WTC11 (cell line): ENCODE measurements at regions of chr12 and their contacts with region 1.

Region 1: GRCh38 chr12:53344824-53345485 is 8.8 kb upstream of the SP7 start:
- DNase-seq: peak; percentile 72
- ATAC-seq: peak; percentile 65
- H3K4me3 Mint-ChIP-seq: peak overlapping the region; percentile 96
- H3K27ac Mint-ChIP-seq: peak overlapping the region; percentile 79
- H3K4me1 Mint-ChIP-seq: peaks cover 13% of the 10 kb centered on the region
- H3K27me3 Mint-ChIP-seq: peaks cover 48% of the 10 kb centered on the region
- CTCF ChIP-seq: no peak

Region 2: DNA sequence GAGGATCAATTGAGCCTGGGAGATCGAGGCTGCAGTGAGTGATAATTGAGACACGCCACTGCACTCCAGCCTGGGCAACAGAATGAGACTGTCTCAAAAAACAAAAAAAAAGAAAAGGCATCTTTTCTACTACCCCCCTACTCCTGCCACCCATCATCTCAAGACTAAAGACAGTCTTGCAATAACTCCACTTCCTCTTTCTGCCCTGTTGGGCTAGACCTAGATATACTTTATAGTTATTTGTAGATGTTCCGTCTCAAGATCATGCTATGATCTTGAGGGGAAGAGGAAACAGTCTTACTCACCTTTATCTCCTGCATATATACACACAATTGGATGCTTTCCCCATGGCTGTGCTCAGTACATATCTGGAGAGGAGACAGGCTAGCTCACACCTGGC is 89.0 kb before region 1 on chr12:
- CTCF ChIA-PET with region 1: no interaction called
- POLR2A ChIA-PET with region 1: no interaction called
- DNase-seq: no peak
- ATAC-seq: no peak
- H3K4me3 Mint-ChIP-seq: no peak overlapping the region
- H3K27ac Mint-ChIP-seq: no peak overlapping the region
- H3K4me1 Mint-ChIP-seq: peaks cover 16% of the 10 kb centered on the region
- H3K27me3 Mint-ChIP-seq: no peaks in the 10 kb centered on the region
- CTCF ChIP-seq: no peak

Region 3: GRCh38 chr12:53379389-53380103 is 34.6 kb after region 1 on chr12:
- CTCF ChIA-PET with region 1: interaction called, 15 read pairs
- POLR2A ChIA-PET with region 1: interaction called, 10 read pairs
- DNase-seq: peak; percentile 95
- ATAC-seq: peak; percentile 87
- H3K4me3 Mint-ChIP-seq: no peak overlapping the region
- H3K27ac Mint-ChIP-seq: no peak overlapping the region
- H3K4me1 Mint-ChIP-seq: peaks cover 27% of the 10 kb centered on the region
- H3K27me3 Mint-ChIP-seq: peaks cover 3% of the 10 kb centered on the region; the same call in 1 of the 2 replicates
- CTCF ChIP-seq: no peak